Left cardiac atrium (tissue), 4 donors: ENCODE measurements at regions of chr1 and their contacts with region 1.

Region 1: GRCh38 chr1:19596714-19597495 is 47.2 kb upstream of the NBL1 start:
- DNase-seq: peak; percentile 98
- ATAC-seq: peak; percentile 95 to 97

Region 2: GRCh38 chr1:19384113-19384512 is 212.8 kb before region 1 on chr1:
- intact Hi-C with region 1: no loop called
- DNase-seq: peak; percentile 67
- ATAC-seq: peak in 1 of 2 donors; percentile 63

Region 3: GRCh38 chr1:19644681-19645410 is 47.9 kb after region 1 on chr1:
- intact Hi-C with region 1: loop called in 1 of 2 experiments (anchors 5 kb)
- DNase-seq: peak; percentile 54
- ATAC-seq: peak; percentile 10 to 36